Heart left ventricle (tissue), 16 donors: ENCODE measurements at regions of chr7 and their contacts with region 1.

Region 1: GRCh38 chr7:139651308-139651707 is 126.5 kb downstream of the HIPK2 start:
- DNase-seq: peak in 1 of 5 donors; percentile 41
- ATAC-seq: no peak
- H3K4me3 ChIP-seq: no peak overlapping the region
- H3K27ac ChIP-seq: peak overlapping the region; percentile 28 to 84 (median 74)
- H3K4me1 ChIP-seq: peaks cover 10 to 96% (median 79%) of the 10 kb centered on the region in 12 donors
- H3K27me3 ChIP-seq: no peaks in the 10 kb centered on the region
- CTCF ChIP-seq: no peak
- POLR2A ChIP-seq: no peak

Region 2: DNA sequence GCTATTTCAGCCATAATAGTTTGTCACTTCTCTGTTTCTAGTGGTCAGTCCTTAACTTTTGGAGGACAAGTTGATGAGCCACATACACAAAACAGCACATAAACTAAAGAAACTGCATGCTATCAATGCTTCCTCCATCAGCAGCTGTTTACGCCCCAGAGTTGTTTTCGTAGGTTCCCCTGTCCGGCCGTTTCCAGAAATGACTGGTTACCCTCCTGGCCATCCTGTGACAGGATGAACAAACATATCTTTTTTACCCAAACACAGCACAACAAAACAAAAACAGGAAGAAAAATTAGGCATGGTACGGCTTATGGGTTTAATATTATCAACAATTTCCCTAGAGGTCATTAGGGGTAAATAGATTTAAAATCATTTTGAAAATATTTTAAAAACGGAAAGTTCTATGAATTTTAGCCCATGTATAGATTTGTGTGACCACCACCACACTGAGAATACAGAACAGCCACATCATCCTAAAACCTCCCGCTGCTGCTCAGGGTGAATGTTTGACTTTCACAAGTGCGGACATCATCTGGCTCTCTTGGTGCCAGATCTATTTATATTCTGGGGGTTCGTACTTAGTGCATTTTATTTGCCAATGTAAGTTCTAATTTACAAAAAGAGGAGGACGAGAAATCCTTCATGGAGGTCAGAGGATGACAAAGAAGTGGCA is 51.6 kb after region 1 on chr7:
- intact Hi-C with region 1: loop called in 3 of 10 experiments (anchors 5 to 10 kb)
- DNase-seq: no peak
- ATAC-seq: peak; percentile 48 to 71 (median 60)
- H3K4me3 ChIP-seq: no peak overlapping the region
- H3K27ac ChIP-seq: peak overlapping the region; percentile 66 to 93 (median 80)
- H3K4me1 ChIP-seq: peaks cover 14 to 87% (median 55%) of the 10 kb centered on the region in 12 donors
- H3K27me3 ChIP-seq: no peaks in the 10 kb centered on the region
- CTCF ChIP-seq: no peak
- POLR2A ChIP-seq: no peak

Region 3: GRCh38 chr7:139725077-139725476 is 73.8 kb after region 1 on chr7:
- intact Hi-C with region 1: loop called in 3 of 10 experiments (anchors 2 to 5 kb)
- DNase-seq: no peak
- ATAC-seq: peak in 1 of 4 donors; percentile 5
- H3K4me3 ChIP-seq: no peak overlapping the region
- H3K27ac ChIP-seq: peak overlapping the region in 9 of 12 donors; percentile 3 to 97 (median 59)
- H3K4me1 ChIP-seq: peaks cover 15 to 90% (median 62%) of the 10 kb centered on the region in 12 donors
- H3K27me3 ChIP-seq: no peaks in the 10 kb centered on the region
- CTCF ChIP-seq: no peak
- POLR2A ChIP-seq: no peak

Region 4: DNA sequence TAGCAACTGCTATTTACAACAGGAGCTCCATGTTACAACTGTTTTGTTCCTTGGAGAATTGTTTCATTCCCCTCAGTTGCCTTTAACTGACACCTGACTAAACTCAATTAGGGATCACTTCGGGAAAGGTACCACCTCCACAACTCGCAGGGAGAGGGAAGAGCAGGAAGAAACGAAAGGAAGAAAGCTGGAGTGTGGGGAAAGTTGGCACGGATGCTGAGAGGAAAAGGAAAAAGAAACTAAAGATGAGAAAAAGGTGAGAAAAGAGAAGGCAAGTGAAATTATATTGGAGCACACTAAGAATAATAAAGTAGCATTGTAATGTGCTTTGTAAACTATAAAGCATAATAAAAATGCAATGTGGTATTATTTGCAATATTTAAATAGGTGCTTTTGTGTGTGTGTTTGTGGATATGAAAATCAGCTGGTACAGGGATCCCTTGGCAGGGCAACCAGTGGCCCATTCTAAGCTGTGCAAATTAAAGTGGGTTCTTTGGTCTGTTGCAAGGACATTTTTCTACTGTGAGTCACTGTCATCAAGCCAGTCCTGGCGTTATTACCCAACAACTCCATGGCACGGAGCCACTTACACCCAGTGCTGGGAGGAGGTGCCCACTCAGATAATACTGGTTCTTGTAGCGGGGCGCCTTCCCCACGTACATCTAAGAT is 80.6 kb after region 1 on chr7:
- intact Hi-C with region 1: loop called in 4 of 10 experiments (anchors 2 to 5 kb)
- DNase-seq: peak; percentile 80 to 93 (median 84)
- ATAC-seq: peak; percentile 64 to 77 (median 76)
- H3K4me3 ChIP-seq: peak overlapping the region in 4 of 12 donors; percentile 6 to 19 (median 9)
- H3K27ac ChIP-seq: peak overlapping the region; percentile 76 to 97 (median 91)
- H3K4me1 ChIP-seq: peaks cover 42 to 96% (median 82%) of the 10 kb centered on the region in 12 donors
- H3K27me3 ChIP-seq: no peaks in the 10 kb centered on the region
- CTCF ChIP-seq: no peak
- POLR2A ChIP-seq: peak in 1 of 2 donors; percentile 34